ENCODE measurements at regions of chr1 and their contacts with region 1.

Region 1: DNA sequence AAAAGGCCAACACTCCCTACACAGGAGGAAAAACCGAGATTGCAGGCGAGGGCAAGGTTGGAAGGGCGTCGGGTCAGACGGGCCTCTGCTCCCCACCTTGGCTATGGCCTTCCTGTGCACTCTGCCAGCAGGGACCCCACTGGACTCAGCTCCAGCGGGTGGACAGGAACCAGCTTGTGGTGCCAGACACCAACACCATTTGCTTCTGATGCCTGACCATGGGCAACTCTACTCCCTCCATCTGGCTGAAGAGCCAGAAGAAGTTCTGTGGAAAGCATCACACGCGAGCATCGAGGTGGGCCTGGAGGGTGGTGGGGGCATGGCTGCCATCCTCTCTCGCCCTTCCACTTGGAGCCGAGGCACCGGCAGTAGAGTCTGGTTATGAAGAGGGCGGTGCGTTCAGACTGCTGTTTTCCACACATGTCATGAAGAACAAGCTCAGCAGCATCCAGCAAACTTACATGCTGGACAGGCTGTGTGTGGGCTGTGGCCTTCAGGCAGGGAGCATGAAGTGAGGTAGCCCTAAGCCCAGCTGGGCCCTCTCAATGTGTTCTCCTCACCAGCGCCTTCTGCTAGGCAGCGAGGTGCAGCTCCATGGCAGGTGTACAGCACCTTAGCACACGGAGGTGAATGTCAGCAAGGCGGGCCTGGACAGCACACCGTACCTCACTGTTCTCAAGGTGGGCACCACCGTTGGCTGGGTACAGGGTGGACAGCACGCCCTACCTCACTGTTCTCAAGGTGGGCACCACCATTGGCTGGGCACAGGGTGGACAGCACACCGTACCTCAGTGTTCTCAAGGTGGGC is 15.6 kb upstream of the ZNF669 start:
- DNase-seq: no peak
- H3K4me3 ChIP-seq: no peak overlapping the region
- H3K27ac ChIP-seq: no peak overlapping the region
- H3K4me1 ChIP-seq: no peaks in the 10 kb centered on the region
- H3K27me3 ChIP-seq: no peaks in the 10 kb centered on the region
- CTCF ChIP-seq: no peak
- EP300 ChIP-seq: no peak
- POLR2A ChIP-seq: no peak

Region 2: GRCh38 chr1:246959944-246960693 is 159.7 kb before region 1 on chr1:
- intact Hi-C with region 1: no loop called
- DNase-seq: no peak
- H3K4me3 ChIP-seq: no peak overlapping the region
- H3K27ac ChIP-seq: no peak overlapping the region
- H3K4me1 ChIP-seq: no peaks in the 10 kb centered on the region
- H3K27me3 ChIP-seq: no peaks in the 10 kb centered on the region
- CTCF ChIP-seq: peak in 1 of 4 experiments; percentile 8
- EP300 ChIP-seq: no peak
- POLR2A ChIP-seq: no peak

Region 3: DNA sequence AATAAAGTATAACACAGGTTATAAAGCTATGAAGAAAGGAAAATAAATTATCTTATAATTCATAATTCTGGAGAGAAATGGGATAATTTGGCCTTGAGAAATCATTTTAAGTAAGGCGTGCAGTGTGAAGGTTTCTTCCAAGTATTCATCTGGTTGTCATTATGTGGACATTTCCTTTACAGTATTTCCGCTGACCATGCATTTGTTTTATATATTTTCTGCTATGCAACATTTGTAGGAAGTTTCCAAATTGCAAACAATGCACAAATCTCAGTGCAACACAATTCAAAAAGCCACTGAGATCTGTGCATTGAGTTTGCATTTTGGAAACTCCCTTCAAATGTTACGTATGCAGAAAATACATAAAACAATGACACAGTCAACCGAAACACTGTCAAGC is 59.0 kb before region 1 on chr1:
- intact Hi-C with region 1: no loop called
- DNase-seq: no peak
- H3K4me3 ChIP-seq: no peak overlapping the region
- H3K27ac ChIP-seq: no peak overlapping the region
- H3K4me1 ChIP-seq: no peaks in the 10 kb centered on the region
- H3K27me3 ChIP-seq: no peaks in the 10 kb centered on the region
- CTCF ChIP-seq: no peak
- EP300 ChIP-seq: no peak
- POLR2A ChIP-seq: no peak

Region 4: DNA sequence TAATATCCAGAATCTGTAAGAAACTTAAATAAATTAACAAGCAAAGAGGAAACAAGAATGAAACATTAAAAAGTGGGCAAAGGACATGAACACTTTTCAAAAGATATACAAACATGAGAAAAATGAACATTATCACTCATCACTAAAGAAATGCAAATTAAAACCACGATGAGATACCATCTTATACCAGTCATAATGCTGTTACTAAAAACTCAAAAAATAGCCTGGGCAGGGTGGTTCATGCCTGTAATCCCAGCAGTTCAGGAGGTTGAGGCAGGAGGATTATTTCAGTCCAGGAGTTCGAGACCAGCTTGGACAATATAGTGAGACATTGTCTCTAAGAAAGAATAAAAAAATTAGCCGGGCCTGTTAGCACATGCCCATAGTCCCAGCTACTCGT is 45.9 kb after region 1 on chr1:
- intact Hi-C with region 1: loop called (anchors 5 kb)
- DNase-seq: no peak
- H3K4me3 ChIP-seq: no peak overlapping the region
- H3K27ac ChIP-seq: no peak overlapping the region
- H3K4me1 ChIP-seq: no peaks in the 10 kb centered on the region
- H3K27me3 ChIP-seq: no peaks in the 10 kb centered on the region
- CTCF ChIP-seq: no peak
- EP300 ChIP-seq: no peak
- POLR2A ChIP-seq: no peak

Region 5: GRCh38 chr1:248029770-248030169 is 910.0 kb after region 1 on chr1 and contains the start of gene OR2L2:
- intact Hi-C with region 1: no loop called
- DNase-seq: no peak
- H3K4me3 ChIP-seq: no peak within 1 kb of the TSS
- H3K27ac ChIP-seq: no peak within 1 kb of the TSS
- H3K4me1 ChIP-seq: no peaks in the 10 kb centered on the region
- H3K27me3 ChIP-seq: no peaks in the 10 kb centered on the region
- CTCF ChIP-seq: no peak
- EP300 ChIP-seq: no peak
- POLR2A ChIP-seq: no peak
- total RNA-seq, gene OR2L2: under 0.01 to 0.81 TPM in 2 of 4 donors, not detected in the others

Measured in sigmoid colon (tissue), 7 donors.